A673 (cell line): ENCODE measurements at regions of chr1 and their contacts with region 1.

Region 1: GRCh38 chr1:10430216-10431069 is at the start of gene CENPS:
- DNase-seq: peak; percentile 96
- H3K4me3 ChIP-seq: peak within 1 kb of the TSS; percentile 90
- H3K27ac ChIP-seq: peak within 1 kb of the TSS; percentile 90
- H3K4me1 ChIP-seq: peaks cover 5% of the 10 kb centered on the region
- H3K27me3 ChIP-seq: no peaks in the 10 kb centered on the region
- CTCF ChIP-seq: peak; percentile 83
- total RNA-seq, gene CENPS: 37.7 and 42.2 TPM in 2 replicates

Region 2: DNA sequence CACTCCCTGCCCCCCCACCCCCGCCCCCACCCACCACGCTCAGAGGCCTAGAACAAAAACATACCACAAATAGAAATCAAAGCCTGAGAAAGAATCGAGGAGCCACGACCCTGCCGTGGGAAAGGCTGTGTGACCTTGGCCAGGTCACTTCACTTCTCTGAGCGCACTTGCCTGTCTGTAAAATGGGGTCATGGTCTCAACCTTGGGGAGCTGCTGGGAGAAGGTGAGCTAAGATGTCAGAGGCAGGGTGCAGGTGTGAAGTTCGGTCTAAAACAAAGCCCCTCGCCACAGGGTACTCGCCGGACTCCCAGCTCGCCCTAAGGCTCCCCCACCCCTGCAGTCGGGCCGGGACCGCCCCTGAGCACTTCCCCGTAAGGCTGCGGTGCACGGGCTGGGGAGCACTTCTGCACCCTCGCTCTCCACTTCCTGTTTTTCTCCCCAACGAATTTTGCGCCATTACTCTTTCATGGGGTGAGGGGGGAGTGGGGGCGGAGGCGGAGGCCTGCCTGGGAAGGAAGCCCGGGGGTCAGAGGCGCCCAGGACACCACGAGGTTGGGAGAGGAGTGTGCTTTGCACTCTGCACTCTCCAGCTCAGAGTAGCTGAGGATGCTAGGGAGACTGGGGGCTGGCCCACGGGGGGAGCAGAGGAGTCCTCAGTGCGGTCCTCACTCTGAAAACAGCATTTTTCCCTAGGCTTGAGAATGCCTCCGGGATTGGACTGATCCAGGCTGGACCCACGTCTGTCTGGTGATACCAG is 800.8 kb before region 1 on chr1:
- CTCF ChIA-PET with region 1: no interaction called
- POLR2A ChIA-PET with region 1: no interaction called
- intact Hi-C with region 1: loop called (anchors 10 kb)
- DNase-seq: no peak
- H3K4me3 ChIP-seq: no peak overlapping the region
- H3K27ac ChIP-seq: no peak overlapping the region
- H3K4me1 ChIP-seq: no peaks in the 10 kb centered on the region
- H3K27me3 ChIP-seq: no peaks in the 10 kb centered on the region
- CTCF ChIP-seq: no peak

Region 3: DNA sequence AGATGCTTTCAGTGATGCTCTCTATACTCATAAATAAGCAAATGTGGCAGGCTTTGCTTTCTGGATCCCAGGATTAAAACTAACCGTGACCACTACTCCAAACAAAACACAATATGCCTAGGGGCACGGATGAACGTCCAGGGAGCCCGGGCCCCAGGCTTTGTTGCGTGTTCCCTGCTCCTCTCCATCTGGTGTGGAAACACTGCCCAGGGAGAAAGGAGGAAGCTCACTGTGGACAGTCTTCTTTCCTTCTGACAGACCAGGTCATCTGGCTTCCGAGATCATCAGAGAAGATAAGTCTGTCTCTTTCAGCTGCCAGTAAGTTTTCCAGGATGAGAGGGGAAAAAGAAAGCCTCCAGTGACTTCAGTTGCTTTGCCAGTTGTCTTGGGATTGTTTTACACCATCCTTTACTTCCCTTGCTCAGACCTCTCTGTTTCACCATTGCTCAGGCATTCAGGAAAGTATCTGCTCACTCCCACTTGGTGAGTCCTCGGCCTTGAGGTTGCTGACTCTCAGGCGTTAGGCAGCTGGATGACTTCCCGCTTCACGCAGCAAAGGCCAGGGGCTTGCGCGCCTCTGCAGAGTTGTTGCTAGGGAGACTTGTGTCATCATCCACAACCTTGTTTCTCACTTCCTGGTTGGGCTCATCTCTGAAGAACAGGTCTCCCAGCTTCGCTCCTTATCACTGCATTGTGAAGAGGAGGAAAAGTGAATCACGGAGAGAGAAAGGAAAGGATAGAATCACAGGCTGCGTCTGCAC is 52.2 kb before region 1 on chr1:
- CTCF ChIA-PET with region 1: interaction called, 6 read pairs
- POLR2A ChIA-PET with region 1: no interaction called
- intact Hi-C with region 1: loop called (anchors 1 kb)
- DNase-seq: no peak
- H3K4me3 ChIP-seq: no peak overlapping the region
- H3K27ac ChIP-seq: no peak overlapping the region
- H3K4me1 ChIP-seq: no peaks in the 10 kb centered on the region
- H3K27me3 ChIP-seq: no peaks in the 10 kb centered on the region
- CTCF ChIP-seq: no peak

Region 4: GRCh38 chr1:10472220-10473144 is 42.0 kb after region 1 on chr1 and contains the start of gene DFFA:
- CTCF ChIA-PET with region 1: no interaction called
- POLR2A ChIA-PET with region 1: no interaction called
- intact Hi-C with region 1: loop called (anchors 5 kb)
- DNase-seq: peak; percentile 98
- H3K4me3 ChIP-seq: peak within 1 kb of the TSS; percentile 73
- H3K27ac ChIP-seq: peak within 1 kb of the TSS; percentile 65
- H3K4me1 ChIP-seq: peaks cover 4% of the 10 kb centered on the region
- H3K27me3 ChIP-seq: no peaks in the 10 kb centered on the region
- CTCF ChIP-seq: no peak
- total RNA-seq, gene DFFA: 49.1 and 49.7 TPM in 2 replicates

Region 5: GRCh38 chr1:10494754-10495474 is 64.5 kb after region 1 on chr1:
- CTCF ChIA-PET with region 1: interaction called, 24 read pairs
- POLR2A ChIA-PET with region 1: no interaction called
- intact Hi-C with region 1: loop called (anchors 1 kb)
- DNase-seq: peak; percentile 76
- H3K4me3 ChIP-seq: peak overlapping the region; percentile 36
- H3K27ac ChIP-seq: peak overlapping the region; percentile 6
- H3K4me1 ChIP-seq: peaks cover 13% of the 10 kb centered on the region
- H3K27me3 ChIP-seq: no peaks in the 10 kb centered on the region
- CTCF ChIP-seq: peak; percentile 96